Naive thymus-derived CD8-positive, alpha-beta T cell (primary cell): ENCODE measurements at regions of chr6 and their contacts with region 1.

Region 1: GRCh38 chr6:158567871-158568401 is 8.0 kb downstream of the TMEM181 start:
- DNase-seq: peak in 3 of 10 donors; percentile 29 to 35 (median 30)
- ATAC-seq: peak; percentile 60 to 64
- H3K4me3 Mint-ChIP-seq: peak overlapping the region; percentile 70 to 87 (median 80)
- H3K27ac Mint-ChIP-seq: peak overlapping the region; percentile 87 to 99 (median 95)
- H3K4me1 Mint-ChIP-seq: peaks cover 48 to 89% (median 84%) of the 10 kb centered on the region in 4 donors
- H3K27me3 Mint-ChIP-seq: no peaks in the 10 kb centered on the region

Region 2: DNA sequence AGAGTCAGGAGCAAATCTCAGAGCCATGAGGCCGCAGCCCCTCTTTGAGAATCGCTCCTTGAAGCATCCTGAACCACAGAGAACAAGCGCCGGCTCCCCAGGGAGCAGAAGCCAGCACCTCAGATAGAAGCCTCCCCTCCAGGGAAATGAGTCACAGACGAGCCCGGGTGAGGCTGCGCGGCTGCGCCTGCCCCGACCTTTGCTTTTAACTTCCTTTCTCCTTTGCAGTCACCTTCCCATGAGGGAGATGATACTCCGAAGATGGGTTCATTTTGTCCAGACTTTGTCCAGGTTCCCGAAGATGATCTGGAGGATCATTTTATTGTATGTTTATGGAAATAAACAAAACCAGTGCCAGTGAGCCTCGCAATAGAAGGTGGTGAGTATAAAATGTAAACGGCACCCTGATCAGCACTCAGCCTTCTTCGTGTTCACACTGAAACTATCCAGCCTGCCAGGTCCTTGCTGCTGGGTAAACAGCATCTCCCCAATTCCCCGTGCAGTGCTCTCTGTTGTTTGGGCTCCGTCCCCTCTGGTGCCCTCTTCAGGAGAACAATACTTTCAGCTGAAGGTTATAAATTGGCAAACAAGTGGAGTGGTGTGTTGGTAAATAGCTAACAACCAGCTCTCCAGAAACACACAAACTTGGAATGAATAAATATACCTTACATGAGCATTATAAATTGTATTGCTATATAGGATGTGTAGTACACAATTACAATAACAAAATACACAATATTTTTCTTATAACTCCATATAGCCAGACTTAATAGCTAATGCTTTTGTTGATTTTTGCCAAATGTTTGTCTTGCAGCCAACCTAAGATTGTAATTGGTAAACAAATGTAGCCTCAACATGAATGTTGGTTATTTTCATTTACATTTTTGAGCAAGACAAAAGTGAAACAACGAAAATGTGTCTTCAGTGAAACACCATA is 49.5 kb before region 1 on chr6:
- POLR2A ChIA-PET with region 1: no interaction called
- DNase-seq: peak in 4 of 10 donors; percentile 21 to 39 (median 28)
- ATAC-seq: peak; percentile 72 to 81
- H3K4me3 Mint-ChIP-seq: peak overlapping the region; percentile 72 to 84 (median 77)
- H3K27ac Mint-ChIP-seq: peak overlapping the region in 5 of 10 donors; percentile 9 to 75 (median 62)
- H3K4me1 Mint-ChIP-seq: peaks cover 15 to 47% (median 44%) of the 10 kb centered on the region in 4 donors
- H3K27me3 Mint-ChIP-seq: peaks cover 15 to 63% (median 37%) of the 10 kb centered on the region in 5 donors

Region 3: DNA sequence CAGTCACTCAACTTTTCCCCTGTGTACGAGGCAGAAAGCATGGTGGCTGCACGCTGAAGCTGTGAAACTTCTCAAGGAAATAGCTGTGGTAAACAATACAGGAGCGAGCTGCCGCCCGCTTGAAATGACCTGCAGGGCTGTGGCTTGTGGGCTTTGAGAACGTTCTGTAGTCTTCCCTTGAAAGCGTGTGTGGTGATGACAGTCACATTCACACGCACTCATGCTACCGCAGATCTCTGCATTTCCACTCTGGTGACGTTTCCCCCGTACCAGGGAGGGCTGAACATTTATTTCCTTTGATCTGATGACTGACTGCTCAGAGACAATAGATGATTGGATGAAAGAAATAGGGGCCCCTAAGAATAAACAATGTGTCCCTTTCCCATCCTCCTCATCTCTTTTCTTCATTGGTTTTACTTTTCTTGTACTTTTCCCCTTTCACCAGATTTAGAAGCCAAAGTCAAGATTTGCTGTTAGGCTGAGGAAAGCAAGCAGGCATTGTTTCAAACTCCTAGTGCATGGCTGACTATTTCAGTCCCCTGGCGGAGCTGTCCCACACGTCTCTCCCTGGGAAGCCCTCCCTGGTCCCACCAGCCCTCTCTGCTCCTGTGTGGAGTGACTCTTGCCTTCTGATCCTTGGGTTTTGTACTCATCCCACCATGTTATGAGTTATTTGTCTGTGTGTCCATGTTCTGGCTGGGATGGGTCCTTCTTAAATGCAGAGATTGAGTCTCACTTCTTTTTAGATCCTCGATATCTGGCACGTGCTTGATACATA is 85.8 kb after region 1 on chr6:
- POLR2A ChIA-PET with region 1: interaction called, 12 read pairs
- DNase-seq: peak; percentile 63 to 99 (median 94)
- ATAC-seq: peak; percentile 76 to 80
- H3K4me3 Mint-ChIP-seq: peak overlapping the region; percentile 70 to 89 (median 82)
- H3K27ac Mint-ChIP-seq: peak overlapping the region; percentile 90 to 100 (median 99)
- H3K4me1 Mint-ChIP-seq: peaks cover 23 to 75% (median 66%) of the 10 kb centered on the region in 4 donors
- H3K27me3 Mint-ChIP-seq: peaks cover 0 to 2% (median 0%) of the 10 kb centered on the region in 5 donors